ENCODE measurements at regions of chr12 and their contacts with region 1.

Region 1: GRCh38 chr12:104215638-104216297 is at the start of gene TXNRD1:
- DNase-seq: peak; percentile 92
- H3K4me3 Mint-ChIP-seq: peak within 1 kb of the TSS; percentile 76
- H3K27ac Mint-ChIP-seq: peak within 1 kb of the TSS; percentile 52
- H3K4me1 Mint-ChIP-seq: peaks cover 41% of the 10 kb centered on the region
- H3K27me3 Mint-ChIP-seq: no peaks in the 10 kb centered on the region
- CTCF ChIP-seq: peak; percentile 91
- total RNA-seq, gene TXNRD1: 262 and 269 TPM in 2 replicates

Region 2: GRCh38 chr12:104064823-104065427 is 150.8 kb before region 1 on chr12:
- CTCF ChIA-PET with region 1: no interaction called
- intact Hi-C with region 1: no loop called
- DNase-seq: no peak
- H3K4me3 Mint-ChIP-seq: peak overlapping the region; percentile 92
- H3K27ac Mint-ChIP-seq: peak overlapping the region; percentile 64
- H3K4me1 Mint-ChIP-seq: peaks cover 10% of the 10 kb centered on the region
- H3K27me3 Mint-ChIP-seq: peaks cover 13% of the 10 kb centered on the region
- CTCF ChIP-seq: no peak

Region 3: GRCh38 chr12:104137913-104138796 is 77.6 kb before region 1 on chr12 and contains the start of gene NFYB:
- CTCF ChIA-PET with region 1: no interaction called
- intact Hi-C with region 1: no loop called
- DNase-seq: peak; percentile 94
- H3K4me3 Mint-ChIP-seq: peak within 1 kb of the TSS; percentile 62
- H3K27ac Mint-ChIP-seq: no peak within 1 kb of the TSS
- H3K4me1 Mint-ChIP-seq: no peaks in the 10 kb centered on the region
- H3K27me3 Mint-ChIP-seq: peaks cover 20% of the 10 kb centered on the region
- CTCF ChIP-seq: no peak
- total RNA-seq, gene NFYB: 28.3 and 36.0 TPM in 2 replicates

Region 4: DNA sequence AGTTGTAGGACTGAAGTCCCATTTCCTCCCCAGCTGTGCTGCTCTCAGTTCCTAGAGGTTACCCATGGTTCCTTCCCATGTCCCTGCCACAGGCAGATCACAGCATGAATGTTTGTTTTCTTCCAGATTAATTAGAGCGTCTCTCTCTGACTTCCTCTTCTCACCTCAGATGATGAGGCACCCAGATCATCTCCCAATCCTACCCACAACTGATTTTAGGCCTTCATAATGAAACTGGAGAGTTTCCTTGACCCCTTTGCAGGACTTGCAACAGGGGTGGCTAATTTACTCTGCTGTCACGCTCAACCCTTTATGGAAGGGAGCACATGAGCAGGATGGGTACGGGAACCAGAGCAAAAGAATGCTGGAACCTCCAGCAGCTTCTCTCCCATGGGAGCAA is 32.3 kb before region 1 on chr12:
- CTCF ChIA-PET with region 1: no interaction called
- intact Hi-C with region 1: no loop called
- DNase-seq: no peak
- H3K4me3 Mint-ChIP-seq: no peak overlapping the region
- H3K27ac Mint-ChIP-seq: no peak overlapping the region
- H3K4me1 Mint-ChIP-seq: peaks cover 11% of the 10 kb centered on the region
- H3K27me3 Mint-ChIP-seq: no peaks in the 10 kb centered on the region
- CTCF ChIP-seq: no peak

Region 5: DNA sequence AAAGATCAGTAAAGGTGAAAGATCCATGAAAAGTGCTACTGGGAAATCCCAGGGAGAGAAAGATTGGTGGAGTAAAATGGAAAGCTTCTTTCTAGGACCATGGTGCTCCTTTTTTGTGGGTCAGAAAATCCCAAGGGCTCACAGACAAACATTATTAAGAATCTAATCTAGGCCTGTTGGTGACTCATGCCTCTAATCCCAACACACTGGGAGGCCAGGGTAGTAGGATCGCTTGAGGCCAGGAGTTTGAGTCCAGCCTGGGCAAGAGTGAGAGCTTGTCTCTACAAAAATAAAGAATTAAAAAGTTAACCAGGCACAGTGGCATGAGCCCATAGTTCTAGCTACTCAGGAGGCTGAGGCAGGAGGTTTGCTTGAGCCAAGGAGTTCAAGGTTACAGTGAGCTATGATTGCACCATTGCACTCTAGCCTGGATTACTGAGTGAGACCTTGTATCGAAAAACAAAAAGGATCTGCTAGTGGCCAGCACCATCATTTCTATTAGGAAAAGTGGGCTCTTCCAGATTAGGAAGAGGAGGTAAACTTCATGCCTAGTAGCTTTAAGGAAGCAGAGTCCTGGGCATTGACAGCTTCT is 42.8 kb after region 1 on chr12:
- CTCF ChIA-PET with region 1: no interaction called
- intact Hi-C with region 1: no loop called
- DNase-seq: no peak
- H3K4me3 Mint-ChIP-seq: no peak overlapping the region
- H3K27ac Mint-ChIP-seq: no peak overlapping the region
- H3K4me1 Mint-ChIP-seq: peaks cover 17% of the 10 kb centered on the region
- H3K27me3 Mint-ChIP-seq: no peaks in the 10 kb centered on the region
- CTCF ChIP-seq: no peak

Region 6: DNA sequence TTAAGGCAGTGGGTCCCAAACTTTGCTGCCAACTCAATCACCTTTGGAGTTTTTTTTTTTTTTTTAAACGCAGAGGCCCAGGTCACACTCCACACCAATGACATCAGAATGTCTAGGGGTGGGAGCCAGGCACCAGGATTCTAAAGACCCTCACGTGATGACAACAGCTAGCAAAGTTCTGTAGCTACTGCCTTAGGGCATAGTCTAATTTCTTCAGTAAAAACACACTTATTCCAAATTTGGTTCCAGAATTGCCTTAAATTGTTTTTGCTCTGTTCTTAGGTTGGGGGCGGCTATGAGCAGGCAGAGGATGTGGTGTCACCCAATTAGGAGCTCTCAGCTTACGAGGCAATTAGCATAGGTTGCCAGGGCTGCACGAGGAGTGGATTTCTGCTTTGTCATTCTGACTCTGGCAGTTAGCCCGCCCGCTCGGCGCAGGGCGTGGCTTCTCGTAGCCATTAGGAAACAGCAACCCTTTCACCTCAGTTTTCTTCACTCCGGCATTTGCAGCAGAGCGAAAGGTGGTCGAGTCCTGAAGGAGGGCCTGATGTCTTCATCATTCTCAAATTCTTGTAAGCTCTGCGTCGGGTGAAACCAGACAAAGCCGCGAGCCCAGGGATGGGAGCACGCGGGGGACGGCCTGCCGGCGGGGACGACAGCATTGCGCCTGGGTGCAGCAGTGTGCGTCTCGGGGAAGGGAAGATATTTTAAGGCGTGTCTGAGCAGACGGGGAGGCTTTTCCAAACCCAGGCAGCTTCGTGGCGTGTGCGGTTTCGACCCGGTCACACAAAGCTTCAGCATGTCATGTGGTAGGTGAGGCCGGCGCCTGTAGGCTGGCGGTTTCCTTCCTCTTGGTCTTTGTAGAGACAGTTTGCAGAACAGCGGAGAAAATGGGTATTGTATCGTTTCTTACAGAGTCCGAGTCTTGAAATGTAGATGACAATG is 71.0 kb after region 1 on chr12:
- CTCF ChIA-PET with region 1: interaction called, 26 read pairs
- intact Hi-C with region 1: loop called (anchors 1 kb)
- DNase-seq: peak; percentile 94
- H3K4me3 Mint-ChIP-seq: peak overlapping the region; percentile 99
- H3K27ac Mint-ChIP-seq: peak overlapping the region; percentile 99
- H3K4me1 Mint-ChIP-seq: peaks cover 40% of the 10 kb centered on the region
- H3K27me3 Mint-ChIP-seq: no peaks in the 10 kb centered on the region
- CTCF ChIP-seq: no peak

Region 7: GRCh38 chr12:104294845-104295688 is 79.3 kb after region 1 on chr12:
- CTCF ChIA-PET with region 1: interaction called, 26 read pairs
- intact Hi-C with region 1: loop called (anchors 1 kb)
- DNase-seq: no peak
- H3K4me3 Mint-ChIP-seq: peak overlapping the region; percentile 48
- H3K27ac Mint-ChIP-seq: peak overlapping the region; percentile 42
- H3K4me1 Mint-ChIP-seq: peaks cover 67% of the 10 kb centered on the region
- H3K27me3 Mint-ChIP-seq: no peaks in the 10 kb centered on the region
- CTCF ChIP-seq: no peak

Region 8: GRCh38 chr12:104358347-104359003 is 142.7 kb after region 1 on chr12:
- CTCF ChIA-PET with region 1: no interaction called
- intact Hi-C with region 1: loop called (anchors 1 kb)
- DNase-seq: peak; percentile 75
- H3K4me3 Mint-ChIP-seq: no peak overlapping the region
- H3K27ac Mint-ChIP-seq: peak overlapping the region; percentile 58
- H3K4me1 Mint-ChIP-seq: peaks cover 16% of the 10 kb centered on the region
- H3K27me3 Mint-ChIP-seq: no peaks in the 10 kb centered on the region
- CTCF ChIP-seq: peak; percentile 84

Measured in Calu3 (cell line).